ENCODE measurements at regions of chr1 and their contacts with region 1.

Region 1: DNA sequence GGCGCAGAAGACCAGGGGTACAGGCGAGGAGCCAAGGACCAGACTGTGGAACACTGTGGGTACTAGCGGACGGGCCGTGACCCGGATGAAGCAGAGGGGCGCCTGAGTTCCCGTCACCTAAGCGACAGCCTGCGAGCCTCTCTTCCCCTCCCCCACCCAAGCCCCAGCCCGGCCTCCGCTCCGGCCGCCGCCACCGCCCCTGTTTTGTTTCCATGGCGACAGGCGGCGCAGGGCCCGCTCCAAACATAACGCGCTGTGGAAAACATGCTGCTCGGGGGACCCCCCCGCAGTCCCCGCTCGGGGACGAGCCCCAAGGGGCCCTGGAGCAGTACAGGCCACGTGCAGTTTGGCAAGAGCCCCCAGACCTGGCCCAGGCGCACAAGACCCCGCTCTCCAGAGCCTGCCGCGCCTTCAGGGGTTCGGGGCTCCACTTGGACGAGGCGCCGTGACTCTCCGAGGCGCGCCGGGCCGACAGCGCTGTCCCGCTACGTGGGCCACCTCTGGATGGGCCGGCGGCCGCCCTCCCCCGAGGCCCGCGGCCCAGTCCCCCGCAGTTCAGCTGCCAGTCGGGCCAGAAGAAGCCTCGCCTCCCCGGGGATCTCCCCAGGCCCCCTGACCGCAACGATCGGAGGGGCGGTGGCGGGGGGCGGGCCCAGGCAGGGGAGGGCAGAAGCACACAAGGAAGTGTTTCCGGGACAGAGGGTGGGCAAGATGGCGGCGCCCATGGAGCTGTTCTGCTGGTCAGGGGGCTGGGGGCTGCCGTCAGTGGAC is at the start of gene MTX1:
- DNase-seq: peak; percentile 60 to 85
- H3K4me3 ChIP-seq: peak within 1 kb of the TSS; percentile 78
- H3K27ac ChIP-seq: peak within 1 kb of the TSS; percentile 74
- H3K4me1 ChIP-seq: peaks cover 26% of the 10 kb centered on the region
- H3K27me3 ChIP-seq: no peaks in the 10 kb centered on the region
- CTCF ChIP-seq: no peak
- total RNA-seq, gene MTX1: 56.1 and 68.9 TPM in 2 replicates

Region 2: GRCh38 chr1:155044812-155045690 is 163.7 kb before region 1 on chr1:
- CTCF ChIA-PET with region 1: no interaction called
- POLR2A ChIA-PET with region 1: no interaction called
- intact Hi-C with region 1: no loop called
- DNase-seq: peak; percentile 79
- H3K4me3 ChIP-seq: no peak overlapping the region
- H3K27ac ChIP-seq: no peak overlapping the region
- H3K4me1 ChIP-seq: peaks cover 24% of the 10 kb centered on the region
- H3K27me3 ChIP-seq: no peaks in the 10 kb centered on the region
- CTCF ChIP-seq: peak; percentile 73

Region 3: DNA sequence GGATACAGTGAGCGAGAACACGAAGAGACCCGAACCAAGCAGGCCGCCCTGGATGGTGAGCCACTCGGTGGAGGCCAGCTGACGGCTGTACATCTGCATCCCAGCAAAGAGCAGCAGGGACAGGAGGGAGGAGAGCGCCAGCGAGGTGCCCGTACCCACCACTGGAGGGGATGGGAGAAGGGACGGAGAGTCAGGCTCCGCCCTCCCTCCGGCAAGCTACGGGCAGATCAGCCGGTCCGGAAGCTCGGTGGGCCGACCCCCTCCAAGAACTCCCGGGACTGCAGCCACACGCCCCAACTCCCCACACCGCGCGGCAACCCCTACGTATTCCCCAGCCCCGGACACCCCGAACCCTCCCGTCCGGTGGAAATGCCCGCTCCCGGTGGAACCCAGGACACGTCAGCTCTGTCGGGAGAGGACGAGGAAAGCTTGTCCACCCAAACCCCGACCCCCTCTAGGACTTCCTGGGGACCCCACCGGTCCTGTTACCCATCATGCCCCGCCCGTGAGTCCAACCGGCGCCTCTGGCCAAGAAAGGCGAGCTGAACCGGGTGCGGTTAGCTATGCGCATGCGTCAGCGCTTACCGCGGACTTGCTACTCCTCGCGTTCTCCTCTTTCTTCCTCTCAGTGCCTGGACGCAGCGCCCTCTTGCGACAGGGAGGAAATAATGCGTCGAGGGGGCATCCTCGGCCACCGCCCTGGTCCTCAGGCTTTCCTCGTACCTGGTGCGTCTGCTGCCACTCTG is 35.8 kb before region 1 on chr1 and contains the start of gene KRTCAP2:
- CTCF ChIA-PET with region 1: no interaction called
- POLR2A ChIA-PET with region 1: interaction called, 4 read pairs
- intact Hi-C with region 1: loop called (anchors 1 kb)
- DNase-seq: peak; percentile 89 to 93
- H3K4me3 ChIP-seq: peak within 1 kb of the TSS; percentile 89
- H3K27ac ChIP-seq: peak within 1 kb of the TSS; percentile 59
- H3K4me1 ChIP-seq: peaks cover 30% of the 10 kb centered on the region
- H3K27me3 ChIP-seq: no peaks in the 10 kb centered on the region
- CTCF ChIP-seq: peak; percentile 94
- total RNA-seq, gene KRTCAP2: 112 and 156 TPM in 2 replicates

Region 4: GRCh38 chr1:155562581-155563376 is 354.1 kb after region 1 on chr1 and contains the start of gene ASH1L:
- CTCF ChIA-PET with region 1: no interaction called
- POLR2A ChIA-PET with region 1: no interaction called
- intact Hi-C with region 1: no loop called
- DNase-seq: peak; percentile 79 to 90
- H3K4me3 ChIP-seq: peak within 1 kb of the TSS; percentile 86
- H3K27ac ChIP-seq: peak within 1 kb of the TSS; percentile 79
- H3K4me1 ChIP-seq: peaks cover 25% of the 10 kb centered on the region
- H3K27me3 ChIP-seq: no peaks in the 10 kb centered on the region
- CTCF ChIP-seq: 0 out of 2 replicates have a peak, but pooled peaks have one; percentile 21
- total RNA-seq, gene ASH1L: 29.4 and 36.0 TPM in 2 replicates

Measured in PC-9 (cell line).